Mammary epithelial cell (primary cell): ENCODE measurements at regions of chr5 and their contacts with region 1.

Region 1: DNA sequence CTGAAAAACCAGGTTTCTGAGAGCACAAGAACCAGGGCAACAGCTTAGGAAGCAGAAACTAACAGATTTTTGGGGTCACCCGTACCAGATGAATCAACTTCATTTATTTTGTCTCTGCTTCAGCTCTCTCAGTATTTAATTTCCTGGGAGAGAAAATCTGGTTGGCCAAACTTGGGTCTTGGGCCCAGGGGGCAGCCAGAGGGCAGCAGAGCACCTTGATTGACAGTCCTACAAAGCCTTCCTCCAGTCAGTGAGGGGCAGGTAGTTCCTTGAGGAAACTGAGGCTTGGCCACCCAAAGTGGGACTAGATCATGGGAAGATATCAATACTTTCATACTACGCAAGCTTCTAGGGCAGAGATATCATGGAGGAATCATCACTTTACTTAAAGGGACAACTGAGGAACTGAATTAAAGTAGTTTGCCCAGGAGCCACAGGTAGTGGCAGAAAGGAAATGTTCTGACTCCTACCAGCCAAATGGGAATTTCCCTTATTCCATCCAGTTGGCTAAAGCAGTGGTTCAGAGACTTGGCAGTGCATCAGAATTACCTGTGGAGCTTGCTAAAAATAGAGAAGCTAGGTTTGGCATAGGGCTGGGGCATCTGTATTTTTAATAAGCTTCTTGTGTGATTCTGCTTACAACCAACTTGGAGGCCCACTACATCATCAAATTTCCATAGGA is 21.5 kb upstream of the ARHGAP26 start:
- DNase-seq: peak; percentile 76
- H3K4me3 ChIP-seq: no peak overlapping the region
- H3K27ac ChIP-seq: peak overlapping the region; percentile 28
- H3K4me1 ChIP-seq: peaks cover 26% of the 10 kb centered on the region
- H3K27me3 ChIP-seq: no peaks in the 10 kb centered on the region
- CTCF ChIP-seq: peak; percentile 44 to 55

Region 2: DNA sequence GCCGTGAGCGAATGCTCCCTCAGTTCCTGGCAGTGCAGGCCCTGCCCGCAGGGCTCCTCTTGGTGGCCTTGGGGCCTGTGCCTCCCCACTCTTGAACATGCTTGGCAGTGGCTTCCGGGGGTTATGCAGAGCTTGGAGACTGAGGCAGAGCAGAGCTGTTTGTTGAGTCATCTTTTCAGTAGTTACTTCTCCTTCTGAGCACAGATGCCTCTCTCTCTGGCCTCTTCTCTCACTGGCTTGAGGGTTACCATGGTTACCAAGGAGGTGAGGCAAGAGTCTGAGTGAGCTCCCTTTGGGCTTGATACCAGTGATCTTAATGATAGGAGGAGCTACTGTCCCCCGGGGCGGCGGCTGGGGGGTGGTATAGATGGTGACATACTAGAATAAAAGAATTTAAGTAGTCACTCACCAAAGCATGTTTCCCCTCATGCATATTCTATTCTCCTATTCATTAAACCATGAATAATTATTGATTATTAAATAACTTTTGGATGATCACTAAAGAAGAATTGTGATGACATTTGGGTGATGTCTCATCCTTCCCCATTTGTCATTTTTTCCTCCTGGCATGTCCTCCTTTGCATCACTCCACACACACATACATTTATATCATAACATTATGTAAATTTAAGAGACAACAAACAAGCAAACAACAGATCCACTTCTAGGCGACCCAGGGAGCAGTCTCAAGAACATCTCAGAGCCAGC is 132.5 kb after region 1 on chr5:
- CTCF ChIA-PET with region 1: interaction called, 5 read pairs
- dilution Hi-C with region 1: no loop called
- in situ Hi-C with region 1: no loop called
- intact Hi-C with region 1: loop called (anchors 1 kb)
- DNase-seq: no peak
- H3K4me3 ChIP-seq: no peak overlapping the region
- H3K27ac ChIP-seq: no peak overlapping the region
- H3K4me1 ChIP-seq: peaks cover 4% of the 10 kb centered on the region
- H3K27me3 ChIP-seq: no peaks in the 10 kb centered on the region
- CTCF ChIP-seq: no peak

Region 3: DNA sequence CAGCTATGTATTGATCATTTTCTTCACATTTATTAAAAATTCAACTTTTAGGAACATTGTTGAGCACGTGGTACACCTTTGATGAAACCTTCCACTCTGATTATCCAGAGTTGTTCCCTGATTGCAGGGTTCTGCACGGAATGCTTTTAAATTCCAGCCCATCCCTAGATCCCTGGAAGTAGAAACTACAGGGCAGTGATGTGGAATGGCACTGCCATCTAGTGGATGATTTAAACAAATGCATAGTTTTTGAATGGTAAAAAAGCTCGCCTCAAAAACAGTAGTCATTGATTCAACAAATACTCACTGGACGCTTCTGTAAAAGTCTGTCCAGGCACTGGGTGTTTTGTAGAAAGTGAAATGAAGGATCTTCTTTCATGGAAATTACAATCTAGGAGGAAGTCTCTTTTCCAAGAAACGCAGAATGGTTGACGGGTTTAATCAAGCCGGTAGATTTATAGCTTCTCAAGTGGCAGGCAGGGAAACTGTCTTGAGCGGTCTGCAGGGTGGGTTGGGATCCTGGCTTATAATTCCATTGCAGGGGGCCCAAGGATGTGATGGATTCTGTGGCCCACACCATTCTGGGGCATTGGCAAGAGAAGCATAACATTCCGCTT is 139.9 kb after region 1 on chr5:
- CTCF ChIA-PET with region 1: interaction called, 3 read pairs
- dilution Hi-C with region 1: no loop called
- in situ Hi-C with region 1: no loop called
- intact Hi-C with region 1: loop called (anchors 1 kb)
- DNase-seq: no peak
- H3K4me3 ChIP-seq: no peak overlapping the region
- H3K27ac ChIP-seq: no peak overlapping the region
- H3K4me1 ChIP-seq: no peaks in the 10 kb centered on the region
- H3K27me3 ChIP-seq: no peaks in the 10 kb centered on the region
- CTCF ChIP-seq: peak; percentile 53 to 70

Region 4: GRCh38 chr5:142915813-142916424 is 167.2 kb after region 1 on chr5:
- CTCF ChIA-PET with region 1: no interaction called
- dilution Hi-C with region 1: no loop called
- in situ Hi-C with region 1: no loop called
- intact Hi-C with region 1: loop called (anchors 1 kb)
- DNase-seq: peak; percentile 58
- H3K4me3 ChIP-seq: no peak overlapping the region
- H3K27ac ChIP-seq: no peak overlapping the region
- H3K4me1 ChIP-seq: peaks cover 17% of the 10 kb centered on the region
- H3K27me3 ChIP-seq: no peaks in the 10 kb centered on the region
- CTCF ChIP-seq: peak; percentile 90 to 91